Sigmoid colon (tissue), 7 donors: ENCODE measurements at regions of chr1 and their contacts with region 1.

Region 1: DNA sequence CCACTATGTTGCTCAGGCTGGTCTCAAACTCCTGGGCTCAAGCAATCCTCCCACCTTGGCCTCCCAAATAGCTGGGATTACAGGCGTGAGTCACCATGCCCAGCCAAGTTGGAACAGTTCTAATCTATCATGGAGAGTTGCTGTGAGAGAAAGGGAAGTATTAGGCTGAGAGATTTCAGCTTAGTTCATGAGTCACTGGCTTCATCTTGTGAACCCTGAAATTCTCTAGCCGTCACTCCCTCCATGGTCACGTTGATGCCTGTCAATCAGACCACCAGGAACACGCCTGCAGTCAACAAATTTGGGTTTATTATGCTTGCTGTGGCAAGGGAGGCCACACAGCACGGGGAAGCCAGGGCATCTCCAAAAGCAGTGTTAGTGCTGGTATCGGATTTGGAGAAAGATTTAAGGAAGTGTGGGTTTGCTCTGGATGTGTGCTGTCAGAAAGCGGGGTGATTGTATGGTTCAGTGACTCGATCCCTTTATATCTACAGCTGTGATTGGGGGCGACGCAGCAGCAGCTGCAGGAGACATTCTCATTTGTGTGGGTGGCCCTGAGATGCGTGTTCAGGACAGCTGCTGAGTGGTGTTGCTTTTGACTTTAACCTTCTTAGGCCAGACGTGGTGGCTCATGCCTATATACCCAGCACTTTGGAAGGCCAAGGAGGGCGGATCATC is 18.7 kb downstream of the UQCRHL start:
- DNase-seq: no peak
- H3K4me3 ChIP-seq: no peak overlapping the region
- H3K27ac ChIP-seq: no peak overlapping the region
- H3K4me1 ChIP-seq: peaks cover 0 to 12% (median 7%) of the 10 kb centered on the region in 4 donors
- H3K27me3 ChIP-seq: no peaks in the 10 kb centered on the region
- CTCF ChIP-seq: no peak
- EP300 ChIP-seq: no peak
- POLR2A ChIP-seq: no peak

Region 2: DNA sequence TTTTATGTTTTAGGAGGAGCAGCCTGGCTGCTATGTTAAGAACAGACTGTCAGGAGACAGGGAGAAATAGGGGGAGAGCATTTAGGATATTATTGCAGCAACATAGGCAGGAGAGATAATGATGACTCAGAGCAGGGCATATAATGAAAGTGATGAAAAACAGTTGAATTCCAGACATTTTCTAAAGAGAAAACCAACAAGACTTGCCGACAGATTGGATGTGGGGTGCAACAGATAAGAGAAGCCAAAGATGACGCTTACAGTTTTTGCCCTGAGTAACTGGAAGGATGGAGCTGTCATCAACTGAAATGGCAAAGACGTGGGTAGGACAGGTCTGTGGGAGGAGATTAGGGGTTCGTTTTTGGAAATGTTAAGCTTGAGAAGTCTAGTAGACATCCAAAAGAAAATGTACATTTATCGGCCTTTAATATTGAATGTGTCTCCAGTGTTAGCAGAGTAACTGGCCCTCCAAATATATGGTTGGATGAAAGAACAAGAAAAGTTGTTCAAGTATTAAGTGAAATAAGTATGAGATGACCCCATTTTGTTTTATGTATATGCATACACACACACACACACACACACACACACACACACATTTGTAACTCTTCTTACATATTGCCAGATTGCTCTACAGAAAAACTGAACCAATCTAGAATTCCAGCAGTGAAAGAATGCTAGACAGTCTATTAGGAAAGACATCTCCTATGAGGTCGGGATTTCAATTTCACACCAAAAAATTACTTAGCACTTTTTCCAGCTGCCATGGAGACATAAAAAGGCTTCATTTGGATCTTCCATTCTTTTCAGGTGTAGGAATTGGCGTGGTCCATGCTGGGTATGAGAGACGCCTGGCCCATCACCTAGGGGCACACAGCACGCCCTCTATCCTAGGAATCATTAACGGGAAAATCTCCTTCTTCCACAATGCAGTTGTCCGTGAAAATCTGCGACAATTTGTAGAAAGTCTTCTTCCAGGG is 244.9 kb before region 1 on chr1:
- intact Hi-C with region 1: no loop called
- DNase-seq: no peak
- H3K4me3 ChIP-seq: no peak overlapping the region
- H3K27ac ChIP-seq: no peak overlapping the region
- H3K4me1 ChIP-seq: no peaks in the 10 kb centered on the region
- H3K27me3 ChIP-seq: no peaks in the 10 kb centered on the region
- CTCF ChIP-seq: no peak
- EP300 ChIP-seq: no peak
- POLR2A ChIP-seq: no peak

Region 3: DNA sequence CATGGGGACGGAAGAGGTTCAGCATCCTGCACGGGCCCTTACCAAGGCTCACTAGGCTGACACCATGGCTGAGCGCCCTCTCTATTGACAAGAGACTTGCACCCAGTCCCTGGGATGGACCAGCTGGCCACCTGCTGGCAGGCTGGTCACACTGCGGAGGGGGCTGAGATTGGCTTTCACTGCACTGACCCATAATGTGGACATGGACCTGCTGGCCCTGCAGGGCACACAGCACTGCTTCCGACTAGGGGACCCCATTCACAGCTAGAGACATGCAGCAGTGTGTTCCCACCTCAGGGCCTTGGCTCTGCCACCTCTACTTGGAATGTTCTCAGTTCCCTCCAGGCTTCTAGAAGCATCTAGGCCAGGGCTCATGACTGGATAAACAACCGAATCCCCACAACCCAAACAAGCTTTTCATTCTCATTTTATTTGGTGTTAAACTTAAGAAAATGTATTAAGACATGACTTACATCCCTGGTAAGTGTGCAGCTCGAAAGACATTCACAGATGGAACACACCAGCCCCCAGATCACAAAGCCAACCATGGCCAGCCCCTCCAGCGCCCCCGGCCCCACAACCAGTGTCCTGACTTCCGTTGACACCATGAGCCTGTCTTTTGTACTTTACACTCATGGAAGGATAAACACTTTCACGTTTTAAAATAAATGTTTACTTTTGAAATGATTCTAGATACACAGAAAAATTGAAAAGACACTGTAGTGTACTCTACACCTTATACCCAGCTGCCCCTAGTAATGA is 206.0 kb after region 1 on chr1:
- intact Hi-C with region 1: loop called (anchors 2 kb)
- DNase-seq: peak; percentile 84
- H3K4me3 ChIP-seq: no peak overlapping the region
- H3K27ac ChIP-seq: peak overlapping the region in 1 of 4 donors; percentile 40
- H3K4me1 ChIP-seq: no peaks in the 10 kb centered on the region
- H3K27me3 ChIP-seq: no peaks in the 10 kb centered on the region
- CTCF ChIP-seq: peak; percentile 65 to 86 (median 77)
- EP300 ChIP-seq: no peak
- POLR2A ChIP-seq: no peak